PC-9 (cell line): ENCODE measurements at regions of chr10 and their contacts with region 1.

Region 1: DNA sequence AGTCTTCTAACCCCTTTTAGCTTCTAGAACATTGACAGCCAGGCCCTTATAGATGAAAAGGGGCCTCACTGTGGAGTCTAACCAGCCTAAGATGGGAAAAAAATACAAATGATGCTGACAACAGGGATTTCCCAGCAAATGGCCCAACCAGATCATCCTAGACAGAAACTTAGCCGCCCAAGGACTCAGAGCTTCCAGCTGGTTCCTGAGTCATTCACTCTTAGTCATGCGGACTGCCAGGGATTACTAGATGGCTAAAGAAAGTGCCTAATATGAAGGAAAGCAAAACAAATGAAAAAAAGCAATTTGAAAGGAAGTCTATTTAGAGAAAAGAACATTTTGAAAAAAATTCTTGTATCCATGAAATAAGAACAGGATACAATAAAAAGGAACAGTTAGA is 23.7 kb downstream of the TSPAN14 start:
- DNase-seq: peak in 1 of 2 experiments; percentile 84
- H3K4me3 ChIP-seq: no peak overlapping the region
- H3K27ac ChIP-seq: peak overlapping the region; percentile 71
- H3K4me1 ChIP-seq: peaks cover 58% of the 10 kb centered on the region
- H3K27me3 ChIP-seq: no peaks in the 10 kb centered on the region
- CTCF ChIP-seq: no peak

Region 2: GRCh38 chr10:80413271-80413996 is 64.4 kb before region 1 on chr10:
- CTCF ChIA-PET with region 1: no interaction called
- POLR2A ChIA-PET with region 1: no interaction called
- intact Hi-C with region 1: no loop called
- DNase-seq: peak in 1 of 2 experiments; percentile 16
- H3K4me3 ChIP-seq: no peak overlapping the region
- H3K27ac ChIP-seq: no peak overlapping the region
- H3K4me1 ChIP-seq: peaks cover 24% of the 10 kb centered on the region
- H3K27me3 ChIP-seq: no peaks in the 10 kb centered on the region
- CTCF ChIP-seq: no peak

Region 3: GRCh38 chr10:80542053-80542452 is 64.2 kb after region 1 on chr10:
- CTCF ChIA-PET with region 1: interaction called, 10 read pairs
- POLR2A ChIA-PET with region 1: no interaction called
- intact Hi-C with region 1: no loop called
- DNase-seq: no peak
- H3K4me3 ChIP-seq: no peak overlapping the region
- H3K27ac ChIP-seq: no peak overlapping the region
- H3K4me1 ChIP-seq: no peaks in the 10 kb centered on the region
- H3K27me3 ChIP-seq: no peaks in the 10 kb centered on the region
- CTCF ChIP-seq: no peak